CD8-positive, alpha-beta T cell (primary cell): ENCODE measurements at regions of chr5 and their contacts with region 1.

Region 1: DNA sequence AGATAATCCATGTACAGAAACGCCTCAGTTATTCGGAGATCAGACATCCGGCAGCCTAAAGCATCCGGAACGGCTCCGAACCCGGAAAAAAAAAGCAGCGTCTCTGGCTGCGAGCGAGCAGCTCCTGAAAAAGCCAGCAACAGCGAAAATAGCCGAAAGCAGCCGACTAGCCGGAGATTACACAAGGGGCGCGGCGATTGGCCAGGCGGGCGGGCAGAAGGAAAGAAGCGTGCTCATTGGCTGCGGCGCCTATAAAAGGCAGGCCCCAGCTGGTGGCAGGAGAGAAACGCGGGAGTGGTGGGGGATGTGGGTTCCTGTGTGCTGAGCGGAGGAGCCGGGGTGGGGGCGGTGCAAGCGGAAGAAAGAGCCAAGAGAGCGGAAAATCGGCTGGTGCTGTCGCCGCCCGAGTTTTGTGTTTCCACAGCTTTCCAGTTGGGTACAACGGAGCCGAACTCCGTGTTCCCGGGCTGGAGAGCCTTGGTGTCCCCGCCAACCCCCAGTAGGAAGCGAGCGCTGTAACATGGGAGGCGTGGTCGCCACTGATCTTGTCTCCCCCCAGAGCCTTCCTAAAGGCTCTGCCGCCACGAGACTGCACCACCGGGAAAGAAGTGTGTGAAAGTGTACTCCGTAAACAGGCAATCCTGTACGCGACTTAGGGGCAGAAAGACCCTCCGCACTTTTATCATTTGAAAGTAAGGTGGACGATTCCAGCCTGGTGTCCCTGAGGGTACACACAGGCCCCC is at the start of gene ARL15:
- DNase-seq: peak; percentile 95 to 99 (median 98)
- ATAC-seq: peak; percentile 92
- H3K4me3 ChIP-seq: peak within 1 kb of the TSS; percentile 96 to 97
- H3K4me3 Mint-ChIP-seq: peak within 1 kb of the TSS; percentile 90
- H3K27ac ChIP-seq: peak within 1 kb of the TSS; percentile 78 to 79
- H3K27ac Mint-ChIP-seq: peak within 1 kb of the TSS; percentile 92
- H3K4me1 ChIP-seq: peaks cover 9% of the 10 kb centered on the region
- H3K4me1 Mint-ChIP-seq: peaks cover 34% of the 10 kb centered on the region
- H3K27me3 ChIP-seq: no peaks in the 10 kb centered on the region
- H3K27me3 Mint-ChIP-seq: peaks cover 6% of the 10 kb centered on the region
- CTCF ChIP-seq: no peak
- total RNA-seq, gene ARL15: 7.4 to 7.5 TPM

Region 2: DNA sequence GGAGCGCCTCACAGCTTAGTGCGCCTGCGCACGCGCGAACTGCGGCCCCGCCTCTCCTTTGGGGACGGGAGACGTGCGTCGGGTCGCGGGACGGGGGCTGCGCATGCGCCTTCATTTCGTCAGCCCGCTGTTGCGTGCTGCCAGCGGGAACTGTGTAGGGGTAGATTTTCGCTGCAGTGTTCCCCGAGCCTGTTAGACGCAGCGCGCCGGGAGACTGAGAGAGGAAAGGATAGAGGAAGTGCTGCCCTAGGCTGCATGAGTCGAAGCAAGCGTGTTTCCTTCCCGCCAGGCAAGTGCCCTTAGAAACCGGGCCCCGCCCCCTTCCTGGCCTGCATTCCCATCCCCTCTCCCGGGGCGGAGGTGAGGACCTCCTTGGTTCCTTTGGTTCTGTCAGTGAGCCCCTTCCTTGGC is 1510.6 kb before region 1 on chr5:
- CTCF ChIA-PET with region 1: no interaction called
- POLR2A ChIA-PET with region 1: no interaction called
- intact Hi-C with region 1: loop called in 1 of 2 experiments (anchors 5 kb)
- DNase-seq: peak; percentile 87 to 97 (median 96)
- ATAC-seq: peak; percentile 87
- H3K4me3 ChIP-seq: peak overlapping the region; percentile 81 to 89
- H3K4me3 Mint-ChIP-seq: peak overlapping the region; percentile 97
- H3K27ac ChIP-seq: peak overlapping the region; percentile 70 to 72
- H3K27ac Mint-ChIP-seq: peak overlapping the region; percentile 96
- H3K4me1 ChIP-seq: peaks cover 33% of the 10 kb centered on the region
- H3K4me1 Mint-ChIP-seq: peaks cover 68% of the 10 kb centered on the region
- H3K27me3 ChIP-seq: no peaks in the 10 kb centered on the region
- H3K27me3 Mint-ChIP-seq: no peaks in the 10 kb centered on the region
- CTCF ChIP-seq: no peak

Region 3: GRCh38 chr5:53481887-53482716 is 828.5 kb before region 1 on chr5:
- CTCF ChIA-PET with region 1: no interaction called
- POLR2A ChIA-PET with region 1: interaction called, 4 read pairs
- intact Hi-C with region 1: loop called in 1 of 2 experiments (anchors 10 kb)
- DNase-seq: peak in 7 of 9 experiments; percentile 35 to 72 (median 53)
- ATAC-seq: peak; percentile 68
- H3K4me3 ChIP-seq: peak overlapping the region; percentile 48 to 60
- H3K4me3 Mint-ChIP-seq: peak overlapping the region; percentile 86
- H3K27ac ChIP-seq: no peak overlapping the region
- H3K27ac Mint-ChIP-seq: peak overlapping the region; percentile 43
- H3K4me1 ChIP-seq: peaks cover 12% of the 10 kb centered on the region
- H3K4me1 Mint-ChIP-seq: peaks cover 39% of the 10 kb centered on the region
- H3K27me3 ChIP-seq: peaks cover 13 to 14% of the 10 kb centered on the region in 2 experiments
- H3K27me3 Mint-ChIP-seq: peaks cover 47% of the 10 kb centered on the region
- CTCF ChIP-seq: peak; percentile 29

Region 4: DNA sequence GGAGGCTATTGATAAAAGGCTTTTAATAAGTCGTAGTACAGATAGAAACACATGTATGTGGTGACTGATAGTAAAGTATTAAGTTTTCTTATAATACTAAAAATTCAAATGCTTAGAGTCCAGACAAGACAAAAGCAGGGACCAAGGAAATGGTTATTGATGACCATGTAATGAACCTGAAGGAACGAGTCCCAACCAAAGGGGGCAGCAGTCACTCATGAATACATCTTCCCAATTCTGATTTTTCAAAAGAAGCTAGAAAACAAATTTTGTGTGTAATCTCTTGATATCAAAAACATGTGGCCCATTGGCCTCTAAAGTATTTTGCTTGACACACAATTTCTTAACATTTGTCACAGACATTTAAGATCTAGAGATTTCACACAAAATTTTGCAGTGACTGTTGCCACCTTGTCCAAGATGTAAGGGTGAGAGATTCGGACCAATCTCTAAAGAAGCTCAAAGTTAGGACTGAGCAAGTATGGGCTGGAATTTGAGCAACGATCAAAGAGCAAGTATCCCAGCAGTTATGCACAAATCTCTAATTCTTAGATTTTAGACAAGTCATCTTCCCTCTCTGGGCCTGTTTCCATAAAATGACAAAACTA is 67.0 kb before region 1 on chr5:
- CTCF ChIA-PET with region 1: interaction called, 5 read pairs
- POLR2A ChIA-PET with region 1: no interaction called
- intact Hi-C with region 1: loop called in 1 of 2 experiments (anchors 5 kb)
- DNase-seq: peak in 4 of 9 experiments; percentile 17 to 55 (median 41)
- ATAC-seq: no peak
- H3K4me3 ChIP-seq: no peak overlapping the region
- H3K4me3 Mint-ChIP-seq: no peak overlapping the region
- H3K27ac ChIP-seq: no peak overlapping the region
- H3K27ac Mint-ChIP-seq: no peak overlapping the region
- H3K4me1 ChIP-seq: no peaks in the 10 kb centered on the region
- H3K4me1 Mint-ChIP-seq: peaks cover 11% of the 10 kb centered on the region
- H3K27me3 ChIP-seq: no peaks in the 10 kb centered on the region
- H3K27me3 Mint-ChIP-seq: no peaks in the 10 kb centered on the region
- CTCF ChIP-seq: peak; percentile 76

Region 5: DNA sequence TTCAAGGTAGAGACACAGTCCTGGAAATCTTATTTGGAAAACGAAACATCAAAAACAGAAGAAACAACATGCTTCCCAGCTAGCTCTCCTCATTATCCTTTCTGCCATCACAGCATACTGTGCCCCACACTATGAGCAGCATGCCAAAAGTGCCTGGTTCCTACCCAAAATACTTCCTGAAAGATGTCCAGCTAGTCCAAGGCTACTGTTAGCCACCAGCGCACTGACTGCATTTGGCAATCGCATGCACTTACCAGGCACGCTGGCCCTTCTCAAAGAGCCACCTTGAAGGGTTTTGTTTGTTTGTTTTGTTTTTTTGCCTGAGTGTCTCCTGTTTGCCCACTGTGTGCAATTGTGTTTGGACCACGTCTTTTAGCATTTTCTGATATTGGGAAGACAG is 151.7 kb after region 1 on chr5:
- CTCF ChIA-PET with region 1: no interaction called
- POLR2A ChIA-PET with region 1: no interaction called
- intact Hi-C with region 1: no loop called
- DNase-seq: no peak
- ATAC-seq: no peak
- H3K4me3 ChIP-seq: no peak overlapping the region
- H3K4me3 Mint-ChIP-seq: no peak overlapping the region
- H3K27ac ChIP-seq: no peak overlapping the region
- H3K27ac Mint-ChIP-seq: no peak overlapping the region
- H3K4me1 ChIP-seq: no peaks in the 10 kb centered on the region
- H3K4me1 Mint-ChIP-seq: no peaks in the 10 kb centered on the region
- H3K27me3 ChIP-seq: no peaks in the 10 kb centered on the region
- H3K27me3 Mint-ChIP-seq: peaks cover 16% of the 10 kb centered on the region
- CTCF ChIP-seq: no peak

Region 6: DNA sequence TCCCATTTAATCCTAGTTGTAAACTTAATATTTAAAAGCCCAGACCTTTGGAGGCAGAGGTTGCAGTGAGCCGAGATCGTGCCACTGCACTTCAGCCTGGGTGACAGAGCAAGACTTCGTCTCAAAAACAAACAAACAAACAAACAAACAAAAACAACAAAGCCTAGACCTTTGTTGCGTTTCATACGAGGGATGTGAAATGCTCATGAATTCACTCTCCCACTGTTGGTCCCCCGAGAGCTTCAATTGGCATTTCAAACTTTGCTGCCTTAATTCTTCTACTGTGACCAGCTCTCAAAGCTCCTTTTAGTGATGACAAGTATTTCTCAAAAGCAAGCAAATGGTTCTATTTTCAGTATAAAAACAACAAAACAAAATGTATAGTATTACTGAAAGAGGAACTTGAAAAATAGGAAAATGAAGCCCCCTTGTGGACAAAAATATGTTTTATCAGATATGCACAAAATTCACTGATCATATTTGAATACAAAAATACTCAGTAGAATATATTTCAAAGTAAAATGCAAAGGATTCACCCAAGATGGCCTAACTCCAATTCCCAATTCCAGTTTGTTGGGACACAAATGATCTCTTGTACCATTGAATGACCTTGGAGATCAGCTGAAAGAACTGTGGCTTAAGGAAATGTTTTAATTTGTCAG is 534.4 kb after region 1 on chr5:
- CTCF ChIA-PET with region 1: no interaction called
- POLR2A ChIA-PET with region 1: no interaction called
- intact Hi-C with region 1: loop called (anchors 2 to 10 kb)
- DNase-seq: peak in 2 of 9 experiments; percentile 59 to 70
- ATAC-seq: no peak
- H3K4me3 ChIP-seq: no peak overlapping the region
- H3K4me3 Mint-ChIP-seq: peak overlapping the region; percentile 55
- H3K27ac ChIP-seq: no peak overlapping the region
- H3K27ac Mint-ChIP-seq: peak overlapping the region; percentile 15
- H3K4me1 ChIP-seq: peaks cover 3% of the 10 kb centered on the region
- H3K4me1 Mint-ChIP-seq: peaks cover 3% of the 10 kb centered on the region
- H3K27me3 ChIP-seq: no peaks in the 10 kb centered on the region
- H3K27me3 Mint-ChIP-seq: peaks cover 9% of the 10 kb centered on the region
- CTCF ChIP-seq: peak; percentile 78

Region 7: GRCh38 chr5:55307383-55308253 is 997.0 kb after region 1 on chr5 and contains the starts of genes DHX29 and MTREX:
- CTCF ChIA-PET with region 1: no interaction called
- POLR2A ChIA-PET with region 1: no interaction called
- intact Hi-C with region 1: loop called (anchors 5 to 10 kb)
- DNase-seq: peak; percentile 76 to 93 (median 87)
- ATAC-seq: peak; percentile 90
- H3K4me3 ChIP-seq: peak within 1 kb of the TSS; percentile 72 to 76
- H3K4me3 Mint-ChIP-seq: no peak within 1 kb of the TSS
- H3K27ac ChIP-seq: peak within 1 kb of the TSS; percentile 86 to 90
- H3K27ac Mint-ChIP-seq: no peak within 1 kb of the TSS
- H3K4me1 ChIP-seq: peaks cover 41% of the 10 kb centered on the region
- H3K4me1 Mint-ChIP-seq: peaks cover 38% of the 10 kb centered on the region
- H3K27me3 ChIP-seq: no peaks in the 10 kb centered on the region
- H3K27me3 Mint-ChIP-seq: no peaks in the 10 kb centered on the region
- CTCF ChIP-seq: no peak
- total RNA-seq, gene DHX29: 15.4 to 19.9 TPM
- total RNA-seq, gene MTREX: 62.8 to 66.5 TPM

Region 8: DNA sequence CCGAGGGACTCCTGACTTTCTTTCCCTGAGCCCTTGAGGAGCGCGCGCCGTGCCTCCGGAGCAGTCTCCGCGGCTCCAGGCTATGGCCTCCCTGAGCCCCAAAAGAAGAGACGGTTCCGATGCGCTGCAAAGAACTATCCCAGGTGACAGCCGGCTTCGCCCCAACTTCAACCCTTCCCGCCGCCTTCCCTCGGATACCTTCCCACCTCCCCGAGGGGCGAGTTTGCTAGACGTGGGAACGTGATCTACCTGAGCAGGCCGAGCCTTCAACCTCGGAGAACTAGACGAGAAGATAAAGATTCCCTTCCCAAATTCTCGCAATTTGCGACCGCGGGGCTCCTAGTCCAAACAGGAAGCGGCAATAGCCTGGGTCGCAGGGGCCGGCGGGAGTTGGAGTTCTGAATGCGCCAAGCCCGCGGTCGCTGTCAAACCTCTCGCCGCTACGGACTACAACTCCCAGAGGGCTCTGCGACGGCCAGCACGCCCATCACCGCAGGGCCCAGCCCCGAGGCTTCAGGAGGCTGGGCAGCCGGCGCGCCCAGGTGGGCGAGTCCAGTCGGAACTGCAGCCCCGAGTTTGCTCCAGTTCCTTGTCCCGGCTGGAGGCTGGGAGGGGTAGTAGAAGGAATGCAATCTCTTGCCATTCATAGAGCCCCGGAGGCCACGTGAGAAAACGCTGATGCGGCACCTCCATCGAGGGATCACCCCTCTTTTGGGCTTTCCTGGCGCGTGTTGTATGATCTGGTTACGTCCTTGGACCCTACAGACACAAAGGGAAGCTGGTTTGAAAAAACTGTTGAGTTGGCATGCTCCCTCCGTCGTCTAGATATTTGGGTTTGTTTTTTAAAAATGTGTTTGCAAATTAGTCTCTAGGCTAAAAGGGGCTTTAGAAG is 1401.6 kb after region 1 on chr5 and contains the start of gene SLC38A9:
- CTCF ChIA-PET with region 1: no interaction called
- POLR2A ChIA-PET with region 1: no interaction called
- intact Hi-C with region 1: loop called in 1 of 2 experiments (anchors 5 kb)
- DNase-seq: peak; percentile 83 to 94 (median 91)
- ATAC-seq: peak; percentile 99
- H3K4me3 ChIP-seq: peak within 1 kb of the TSS; percentile 92 to 100
- H3K4me3 Mint-ChIP-seq: peak within 1 kb of the TSS; percentile 98
- H3K27ac ChIP-seq: peak within 1 kb of the TSS; percentile 54 to 73
- H3K27ac Mint-ChIP-seq: peak within 1 kb of the TSS; percentile 88
- H3K4me1 ChIP-seq: peaks cover 9% of the 10 kb centered on the region
- H3K4me1 Mint-ChIP-seq: peaks cover 31% of the 10 kb centered on the region
- H3K27me3 ChIP-seq: no peaks in the 10 kb centered on the region
- H3K27me3 Mint-ChIP-seq: peaks cover 3% of the 10 kb centered on the region
- CTCF ChIP-seq: no peak
- total RNA-seq, gene SLC38A9: 6.0 to 6.8 TPM